ENCODE measurements at regions of chr1 and their contacts with region 1.

Region 1: GRCh38 chr1:20080441-20081352 is 10.7 kb downstream of the PLA2G5 start:
- DNase-seq: peak; percentile 57
- ATAC-seq: peak; percentile 88
- H3K4me3 ChIP-seq: peak overlapping the region; percentile 21; the same call in 1 of the 2 replicates
- H3K27ac ChIP-seq: peak overlapping the region; percentile 56
- H3K4me1 ChIP-seq: peaks cover 45% of the 10 kb centered on the region
- H3K27me3 ChIP-seq: no peaks in the 10 kb centered on the region
- CTCF ChIP-seq: 0 out of 6 replicates have a peak, but pooled peaks of 1 of the 3 experiments have one; percentile 4
- EP300 ChIP-seq: no peak
- POLR2A ChIP-seq: no peak
- RAD21 ChIP-seq: peak; percentile 23; the same call in 1 of the 2 replicates

Region 2: DNA sequence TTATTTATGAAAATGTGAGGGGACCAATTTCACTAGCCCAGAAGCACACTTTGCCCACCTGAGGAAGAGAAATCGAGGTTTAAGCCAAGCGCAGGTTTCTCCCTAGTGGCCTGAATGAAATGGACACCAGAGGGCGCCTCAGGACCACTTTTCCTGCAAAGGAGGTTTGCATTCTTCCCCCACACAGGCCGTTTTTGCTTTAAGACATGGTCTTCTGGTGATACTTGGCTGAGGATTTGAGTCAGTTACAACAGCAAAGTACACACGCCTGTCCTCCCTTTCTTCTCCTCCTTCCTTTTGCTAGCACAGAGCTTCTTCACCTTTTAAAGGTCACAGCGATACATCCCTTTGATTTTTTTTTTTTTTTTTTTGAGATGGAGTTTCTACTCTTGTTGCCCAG is 162.6 kb before region 1 on chr1:
- CTCF ChIA-PET with region 1: no interaction called
- POLR2A ChIA-PET with region 1: no interaction called
- RAD21 ChIA-PET with region 1: no interaction called
- SMC1A ChIA-PET with region 1: interaction called, 3 read pairs
- in situ Hi-C with region 1: no loop called
- intact Hi-C with region 1: loop called (anchors 5 kb)
- DNase-seq: peak; percentile 33
- ATAC-seq: peak; percentile 94
- H3K4me3 ChIP-seq: no peak overlapping the region
- H3K27ac ChIP-seq: no peak overlapping the region
- H3K4me1 ChIP-seq: no peaks in the 10 kb centered on the region
- H3K27me3 ChIP-seq: no peaks in the 10 kb centered on the region
- CTCF ChIP-seq: peak; percentile 80 to 98 (median 91); a peak in 5 of 6 replicates
- EP300 ChIP-seq: no peak
- POLR2A ChIP-seq: no peak
- RAD21 ChIP-seq: peak; percentile 98

Region 3: GRCh38 chr1:20017741-20018140 is 63.0 kb before region 1 on chr1:
- CTCF ChIA-PET with region 1: no interaction called
- POLR2A ChIA-PET with region 1: no interaction called
- RAD21 ChIA-PET with region 1: no interaction called
- SMC1A ChIA-PET with region 1: no interaction called
- in situ Hi-C with region 1: no loop called
- intact Hi-C with region 1: no loop called
- DNase-seq: no peak
- ATAC-seq: no peak
- H3K4me3 ChIP-seq: no peak overlapping the region
- H3K27ac ChIP-seq: no peak overlapping the region
- H3K4me1 ChIP-seq: no peaks in the 10 kb centered on the region
- H3K27me3 ChIP-seq: no peaks in the 10 kb centered on the region
- CTCF ChIP-seq: no peak
- EP300 ChIP-seq: no peak
- POLR2A ChIP-seq: no peak
- RAD21 ChIP-seq: no peak

Region 4: DNA sequence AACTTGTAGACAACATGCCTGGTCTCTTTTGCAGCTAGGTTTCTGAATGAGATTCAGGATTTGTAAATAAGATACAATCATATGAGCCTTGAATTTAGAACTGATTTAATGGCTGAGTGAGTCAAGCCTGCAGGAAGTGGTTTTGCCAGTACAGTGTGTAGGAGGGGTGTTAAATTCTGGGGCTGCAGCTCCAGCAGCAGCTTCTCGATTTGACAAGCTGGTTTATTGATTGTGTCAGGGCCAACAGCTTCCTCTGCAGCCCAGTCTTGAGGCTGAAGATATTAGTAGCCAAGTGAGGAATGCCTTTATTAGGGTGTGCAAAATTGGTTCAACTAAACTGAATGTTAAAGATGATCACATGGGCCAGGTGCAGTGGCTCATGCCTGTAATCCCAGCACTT is 22.2 kb before region 1 on chr1:
- CTCF ChIA-PET with region 1: interaction called, 17 read pairs
- POLR2A ChIA-PET with region 1: interaction called, 6 read pairs
- RAD21 ChIA-PET with region 1: interaction called, 7 read pairs
- SMC1A ChIA-PET with region 1: interaction called, 27 read pairs
- in situ Hi-C with region 1: no loop called
- intact Hi-C with region 1: no loop called
- DNase-seq: no peak
- ATAC-seq: peak; percentile 83
- H3K4me3 ChIP-seq: no peak overlapping the region
- H3K27ac ChIP-seq: no peak overlapping the region
- H3K4me1 ChIP-seq: peaks cover 19% of the 10 kb centered on the region
- H3K27me3 ChIP-seq: no peaks in the 10 kb centered on the region
- CTCF ChIP-seq: no peak
- EP300 ChIP-seq: no peak
- POLR2A ChIP-seq: no peak
- RAD21 ChIP-seq: no peak

Region 5: GRCh38 chr1:20093940-20094391 is 13.3 kb after region 1 on chr1:
- CTCF ChIA-PET with region 1: interaction called, 3 read pairs
- POLR2A ChIA-PET with region 1: interaction called, 3 read pairs
- RAD21 ChIA-PET with region 1: no interaction called
- SMC1A ChIA-PET with region 1: interaction called, 11 read pairs
- in situ Hi-C with region 1: no loop called
- intact Hi-C with region 1: no loop called
- DNase-seq: no peak
- ATAC-seq: no peak
- H3K4me3 ChIP-seq: no peak overlapping the region
- H3K27ac ChIP-seq: no peak overlapping the region
- H3K4me1 ChIP-seq: no peaks in the 10 kb centered on the region
- H3K27me3 ChIP-seq: no peaks in the 10 kb centered on the region; a peak in 2 of 4 replicates
- CTCF ChIP-seq: no peak
- EP300 ChIP-seq: no peak
- POLR2A ChIP-seq: no peak
- RAD21 ChIP-seq: no peak

Region 6: DNA sequence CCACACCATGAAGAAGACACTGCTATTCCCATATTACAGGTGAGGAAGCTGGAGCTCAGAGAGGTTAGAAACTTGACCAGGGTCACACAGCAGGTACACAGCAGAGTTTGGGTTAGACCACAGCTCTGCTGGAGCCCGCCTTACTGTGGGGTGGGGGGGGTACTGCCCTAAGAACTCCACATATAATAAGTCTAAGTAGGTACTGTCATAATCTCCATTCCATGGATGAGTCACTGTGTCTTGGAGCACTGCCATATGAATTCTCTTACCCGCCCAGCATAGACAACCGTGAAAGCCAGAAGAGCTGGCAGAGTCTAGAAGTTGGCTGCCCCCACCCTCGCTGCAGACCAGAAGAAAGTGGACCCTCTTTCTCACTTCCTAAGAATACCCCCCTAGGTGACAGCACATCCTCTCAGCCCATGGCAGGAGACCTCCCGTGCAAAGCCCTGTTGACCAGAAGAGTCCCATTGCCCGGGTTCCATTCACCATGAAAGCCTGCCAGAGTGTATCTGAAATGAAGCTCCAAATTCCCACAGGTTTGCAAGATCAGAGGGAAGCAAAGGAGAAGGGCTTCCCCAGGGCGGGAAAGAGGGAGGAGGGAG is 43.9 kb after region 1 on chr1:
- CTCF ChIA-PET with region 1: interaction called, 5 read pairs
- POLR2A ChIA-PET with region 1: interaction called, 11 read pairs
- RAD21 ChIA-PET with region 1: interaction called, 15 read pairs
- SMC1A ChIA-PET with region 1: interaction called, 18 read pairs
- in situ Hi-C with region 1: no loop called
- intact Hi-C with region 1: no loop called
- DNase-seq: no peak
- ATAC-seq: peak; percentile 75
- H3K4me3 ChIP-seq: no peak overlapping the region
- H3K27ac ChIP-seq: peak overlapping the region; percentile 33
- H3K4me1 ChIP-seq: peaks cover 49% of the 10 kb centered on the region
- H3K27me3 ChIP-seq: no peaks in the 10 kb centered on the region
- CTCF ChIP-seq: no peak
- EP300 ChIP-seq: no peak
- POLR2A ChIP-seq: no peak
- RAD21 ChIP-seq: no peak